T-cell (primary cell): ENCODE measurements at regions of chr4 and their contacts with region 1.

Region 1: GRCh38 chr4:77790146-77790545 is 29.0 kb downstream of the CNOT6L start:
- DNase-seq: no peak
- ATAC-seq: no peak
- H3K4me3 ChIP-seq: no peak overlapping the region
- H3K4me3 Mint-ChIP-seq: peak overlapping the region; percentile 0 to 51 (median 44)
- H3K27ac ChIP-seq: no peak overlapping the region
- H3K27ac Mint-ChIP-seq: peak overlapping the region; percentile 50 to 72
- H3K4me1 ChIP-seq: peaks cover 27 to 52% of the 10 kb centered on the region in 2 experiments
- H3K4me1 Mint-ChIP-seq: peaks cover 76 to 84% (median 83%) of the 10 kb centered on the region in 3 donors
- H3K27me3 ChIP-seq: no peaks in the 10 kb centered on the region
- H3K27me3 Mint-ChIP-seq: no peaks in the 10 kb centered on the region

Region 2: DNA sequence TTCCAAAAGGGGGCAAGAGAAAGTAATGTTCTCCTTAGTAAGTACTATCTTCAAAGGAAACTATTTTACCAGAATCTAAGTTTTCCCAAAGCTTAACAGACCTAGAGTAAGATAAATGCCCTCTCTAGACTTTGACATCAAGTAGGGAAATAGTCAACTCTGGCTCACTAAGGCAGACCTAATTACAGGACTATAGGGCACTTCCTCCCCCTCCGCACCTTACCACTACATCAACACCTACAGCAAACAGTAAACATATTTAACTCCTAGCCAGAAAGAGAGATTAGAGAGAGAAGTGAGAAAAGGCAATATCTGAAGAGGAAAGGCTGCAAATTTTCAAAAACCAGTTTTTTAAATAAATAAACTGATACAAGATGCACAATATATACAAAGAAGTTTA is 31.3 kb before region 1 on chr4:
- CTCF ChIA-PET with region 1: no interaction called
- POLR2A ChIA-PET with region 1: interaction called in 1 of 2 experiments, 14 read pairs
- DNase-seq: no peak
- ATAC-seq: no peak
- H3K4me3 ChIP-seq: no peak overlapping the region
- H3K4me3 Mint-ChIP-seq: no peak overlapping the region
- H3K27ac ChIP-seq: no peak overlapping the region
- H3K27ac Mint-ChIP-seq: peak overlapping the region in 1 of 2 donors; percentile 0
- H3K4me1 ChIP-seq: no peaks in the 10 kb centered on the region
- H3K4me1 Mint-ChIP-seq: peaks cover 43 to 55% (median 51%) of the 10 kb centered on the region in 3 donors
- H3K27me3 ChIP-seq: no peaks in the 10 kb centered on the region
- H3K27me3 Mint-ChIP-seq: no peaks in the 10 kb centered on the region

Region 3: DNA sequence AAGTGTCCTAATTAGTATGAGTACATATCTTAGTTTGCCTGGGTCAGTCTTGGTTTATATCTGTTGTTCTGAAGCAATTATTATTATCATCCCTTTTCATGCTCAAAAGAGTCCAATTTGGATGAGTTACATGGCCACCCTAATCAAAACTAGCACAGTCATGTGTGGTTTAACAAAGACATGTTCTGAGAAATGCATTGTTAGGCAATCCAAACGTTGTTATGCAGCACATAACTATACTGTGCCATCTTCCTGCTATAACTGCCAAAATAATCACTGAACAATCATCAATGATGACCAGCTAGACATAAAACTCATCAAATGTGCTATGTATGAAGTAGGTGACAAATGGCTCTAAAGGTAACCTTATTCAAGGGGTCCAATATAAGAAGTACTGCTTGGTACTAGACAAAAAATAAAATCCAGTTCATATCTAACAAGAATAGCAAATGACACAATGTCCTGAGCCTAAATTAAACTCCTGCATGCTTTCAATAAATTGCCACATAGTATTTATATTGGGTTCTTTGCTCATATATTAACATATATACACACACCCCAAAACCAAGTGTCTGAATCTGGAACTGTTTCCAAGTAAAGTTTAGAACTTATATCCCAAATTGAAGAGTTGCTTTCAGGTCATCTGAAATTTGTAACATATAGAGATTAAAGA is 12.9 kb before region 1 on chr4:
- CTCF ChIA-PET with region 1: no interaction called
- POLR2A ChIA-PET with region 1: interaction called, 5 to 10 read pairs
- DNase-seq: no peak
- ATAC-seq: peak in 1 of 4 experiments; percentile 7
- H3K4me3 ChIP-seq: no peak overlapping the region
- H3K4me3 Mint-ChIP-seq: peak overlapping the region in 1 of 3 donors; percentile 24
- H3K27ac ChIP-seq: no peak overlapping the region
- H3K27ac Mint-ChIP-seq: peak overlapping the region; percentile 25 to 41
- H3K4me1 ChIP-seq: peaks cover 9 to 13% of the 10 kb centered on the region in 2 experiments
- H3K4me1 Mint-ChIP-seq: peaks cover 60 to 69% (median 68%) of the 10 kb centered on the region in 3 donors
- H3K27me3 ChIP-seq: no peaks in the 10 kb centered on the region
- H3K27me3 Mint-ChIP-seq: no peaks in the 10 kb centered on the region

Region 4: DNA sequence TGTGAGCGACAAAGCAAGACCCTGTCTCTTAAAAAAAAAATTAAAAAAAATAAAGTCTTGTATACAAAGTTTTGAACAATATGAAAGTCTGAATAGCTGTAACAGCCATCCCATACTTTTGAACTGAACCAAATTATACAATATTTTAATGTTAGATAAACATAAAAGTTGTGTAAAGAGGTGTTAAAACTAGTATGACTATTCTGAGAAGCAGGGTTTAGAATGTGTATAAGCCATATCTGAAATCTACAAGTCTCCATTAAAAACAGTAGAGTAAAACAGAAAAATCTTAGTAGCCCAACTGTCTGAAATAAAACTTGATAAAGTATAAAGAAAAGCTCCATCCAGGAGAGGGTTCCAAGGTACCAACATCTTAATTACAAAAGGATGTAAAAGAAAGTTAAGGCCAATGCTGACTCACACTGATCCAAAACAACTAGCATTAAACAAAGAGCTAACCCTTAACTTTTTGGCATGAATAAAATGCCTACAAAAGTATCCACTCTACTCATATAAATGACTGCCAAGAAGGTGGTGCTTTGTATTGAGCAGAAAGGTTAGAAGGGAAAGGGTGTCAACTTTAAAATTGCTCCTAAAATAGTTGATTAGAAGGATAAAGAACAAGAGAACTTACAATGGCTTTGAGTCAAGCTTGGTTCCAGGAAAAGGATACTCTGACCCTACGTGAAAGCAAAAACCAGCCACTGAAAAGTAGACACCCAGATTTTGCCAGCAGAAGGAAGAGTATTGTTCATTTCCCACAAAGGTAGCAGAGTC is 10.5 kb after region 1 on chr4:
- CTCF ChIA-PET with region 1: no interaction called
- POLR2A ChIA-PET with region 1: interaction called, 9 to 11 read pairs
- DNase-seq: no peak
- ATAC-seq: peak; percentile 13 to 55 (median 44)
- H3K4me3 ChIP-seq: peak overlapping the region; percentile 19 to 25
- H3K4me3 Mint-ChIP-seq: peak overlapping the region; percentile 58 to 73 (median 60)
- H3K27ac ChIP-seq: peak overlapping the region; percentile 70
- H3K27ac Mint-ChIP-seq: peak overlapping the region; percentile 63 to 85
- H3K4me1 ChIP-seq: peaks cover 40 to 48% of the 10 kb centered on the region in 2 experiments
- H3K4me1 Mint-ChIP-seq: peaks cover 88 to 91% (median 90%) of the 10 kb centered on the region in 3 donors
- H3K27me3 ChIP-seq: no peaks in the 10 kb centered on the region
- H3K27me3 Mint-ChIP-seq: no peaks in the 10 kb centered on the region

Region 5: GRCh38 chr4:77827343-77827742 is 37.2 kb after region 1 on chr4:
- CTCF ChIA-PET with region 1: no interaction called
- POLR2A ChIA-PET with region 1: no interaction called
- DNase-seq: peak in 2 of 35 experiments; percentile 12 to 49
- ATAC-seq: peak; percentile 84 to 92 (median 86)
- H3K4me3 ChIP-seq: no peak overlapping the region
- H3K4me3 Mint-ChIP-seq: peak overlapping the region in 1 of 3 donors; percentile 36
- H3K27ac ChIP-seq: peak overlapping the region; percentile 62
- H3K27ac Mint-ChIP-seq: peak overlapping the region; percentile 87 to 90
- H3K4me1 ChIP-seq: peaks cover 34 to 40% of the 10 kb centered on the region in 2 experiments
- H3K4me1 Mint-ChIP-seq: peaks cover 55 to 61% (median 57%) of the 10 kb centered on the region in 3 donors
- H3K27me3 ChIP-seq: no peaks in the 10 kb centered on the region
- H3K27me3 Mint-ChIP-seq: no peaks in the 10 kb centered on the region

Region 6: DNA sequence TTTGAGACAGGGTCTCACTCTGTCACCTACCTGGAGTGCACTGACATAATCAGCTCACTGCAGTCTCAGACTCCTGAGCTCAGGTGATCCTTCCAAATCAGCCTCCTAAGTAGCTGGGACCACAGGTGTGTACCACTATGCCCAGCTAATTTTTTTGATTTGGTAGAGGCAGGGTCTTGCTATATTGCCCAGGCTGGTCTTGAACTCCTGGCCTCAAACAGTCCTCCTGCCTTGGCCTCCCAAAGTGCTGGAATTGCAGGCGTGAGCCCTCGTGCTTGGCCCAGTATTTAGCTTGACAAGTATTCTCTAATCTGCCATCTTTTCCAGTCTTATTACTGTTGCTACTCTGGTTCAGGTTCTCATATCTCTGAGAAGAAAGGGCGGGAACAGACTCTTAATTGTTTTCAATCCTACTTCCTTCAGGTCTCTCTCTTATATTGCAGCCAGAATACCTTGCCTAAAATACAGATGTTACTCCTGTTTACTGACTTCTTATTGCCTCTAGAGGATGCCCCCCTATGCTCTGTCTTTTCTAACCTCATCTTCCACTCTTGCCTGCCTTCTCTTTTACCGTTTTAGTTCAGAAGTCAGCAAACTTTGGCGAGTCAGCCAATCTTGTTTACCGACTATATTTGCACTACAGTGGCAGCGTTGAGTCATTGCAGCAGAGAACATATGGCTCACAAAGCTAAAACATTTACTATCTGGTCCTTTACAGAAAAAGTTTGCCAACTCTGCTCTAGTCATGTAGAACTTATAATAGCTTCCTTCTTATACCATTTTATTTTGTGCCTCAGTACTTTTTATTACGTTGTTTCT is 91.5 kb after region 1 on chr4:
- CTCF ChIA-PET with region 1: no interaction called
- POLR2A ChIA-PET with region 1: no interaction called
- DNase-seq: no peak
- ATAC-seq: no peak
- H3K4me3 ChIP-seq: no peak overlapping the region
- H3K4me3 Mint-ChIP-seq: no peak overlapping the region
- H3K27ac ChIP-seq: no peak overlapping the region
- H3K27ac Mint-ChIP-seq: no peak overlapping the region
- H3K4me1 ChIP-seq: peaks cover 4 to 10% of the 10 kb centered on the region in 2 experiments
- H3K4me1 Mint-ChIP-seq: peaks cover 26 to 34% (median 30%) of the 10 kb centered on the region in 3 donors
- H3K27me3 ChIP-seq: no peaks in the 10 kb centered on the region
- H3K27me3 Mint-ChIP-seq: no peaks in the 10 kb centered on the region